Adrenal gland (tissue), 19 donors: ENCODE measurements at regions of chr20 and their contacts with region 1.

Region 1: DNA sequence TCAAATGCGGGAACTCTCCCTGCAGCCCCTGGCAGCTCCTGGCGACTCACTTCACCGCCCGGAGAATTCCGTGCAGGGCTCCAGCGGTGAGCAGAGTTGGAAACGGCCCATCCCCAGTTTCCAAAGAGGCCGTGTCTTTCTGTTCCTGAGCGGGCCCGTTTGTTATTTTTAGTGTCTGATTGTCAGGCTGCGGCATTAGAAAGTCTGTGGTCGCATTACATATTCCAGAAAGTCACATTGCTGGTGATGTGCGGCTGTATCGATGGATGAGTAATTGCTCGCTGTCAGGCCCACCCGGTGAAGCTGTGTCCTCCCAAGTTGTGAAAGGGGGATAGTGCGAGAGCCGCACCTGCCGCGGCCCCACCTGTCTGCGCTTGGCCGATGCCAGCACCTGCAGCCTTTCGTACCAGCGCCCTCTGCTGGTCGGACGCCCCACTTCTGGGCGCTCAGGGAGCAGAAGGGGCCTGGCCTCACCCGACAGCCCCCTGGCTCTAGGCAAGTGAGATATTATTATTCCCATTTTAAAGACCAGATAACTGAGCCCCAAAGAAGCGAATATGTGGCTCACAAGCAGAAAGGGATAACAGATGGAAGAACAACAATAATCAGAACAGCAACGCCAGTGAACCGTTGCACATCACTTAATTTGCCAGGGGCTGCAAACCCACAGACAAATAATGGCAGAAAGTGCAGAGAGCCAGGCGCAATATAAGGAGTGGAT is 244.9 kb downstream of the TSHZ2 start:
- DNase-seq: peak; percentile 52 to 85 (median 79)
- H3K4me3 ChIP-seq: peak overlapping the region in 1 of 4 donors; percentile 54
- H3K27ac ChIP-seq: no peak overlapping the region
- H3K4me1 ChIP-seq: peaks cover 0 to 10% of the 10 kb centered on the region in 2 donors
- H3K27me3 ChIP-seq: no peaks in the 10 kb centered on the region
- CTCF ChIP-seq: peak; percentile 71 to 95 (median 86)
- POLR2A ChIP-seq: no peak

Region 2: GRCh38 chr20:52312132-52312729 is 904.8 kb before region 1 on chr20:
- intact Hi-C with region 1: loop called in 1 of 2 experiments (anchors 10 kb)
- DNase-seq: peak; percentile 32 to 73 (median 52)
- H3K4me3 ChIP-seq: no peak overlapping the region
- H3K27ac ChIP-seq: no peak overlapping the region
- H3K4me1 ChIP-seq: peaks cover 0 to 6% of the 10 kb centered on the region in 2 donors
- H3K27me3 ChIP-seq: no peaks in the 10 kb centered on the region
- CTCF ChIP-seq: peak; percentile 58 to 78 (median 64)
- POLR2A ChIP-seq: no peak

Region 3: DNA sequence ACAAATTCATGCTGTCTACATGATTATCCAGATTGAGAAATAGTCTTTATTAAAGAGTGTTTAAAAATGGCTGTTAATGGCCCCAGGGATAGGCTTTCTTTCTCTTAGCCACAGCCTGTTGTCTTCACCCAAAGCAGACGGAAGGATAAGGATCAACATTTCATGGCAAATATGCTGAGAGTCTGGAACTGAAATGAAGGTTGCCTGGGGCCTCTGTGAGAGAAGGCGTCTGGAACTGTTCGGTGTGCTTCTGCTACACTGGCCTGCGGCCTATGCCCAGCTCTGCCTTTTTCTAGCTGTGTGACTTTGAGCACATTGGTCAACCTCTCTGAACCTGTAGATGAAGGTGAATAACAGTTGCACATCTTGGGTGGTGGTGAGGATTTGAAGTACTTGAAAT is 652.4 kb before region 1 on chr20:
- intact Hi-C with region 1: no loop called
- DNase-seq: no peak
- H3K4me3 ChIP-seq: no peak overlapping the region
- H3K27ac ChIP-seq: no peak overlapping the region
- H3K4me1 ChIP-seq: no peaks in the 10 kb centered on the region
- H3K27me3 ChIP-seq: no peaks in the 10 kb centered on the region
- CTCF ChIP-seq: no peak
- POLR2A ChIP-seq: no peak

Region 4: DNA sequence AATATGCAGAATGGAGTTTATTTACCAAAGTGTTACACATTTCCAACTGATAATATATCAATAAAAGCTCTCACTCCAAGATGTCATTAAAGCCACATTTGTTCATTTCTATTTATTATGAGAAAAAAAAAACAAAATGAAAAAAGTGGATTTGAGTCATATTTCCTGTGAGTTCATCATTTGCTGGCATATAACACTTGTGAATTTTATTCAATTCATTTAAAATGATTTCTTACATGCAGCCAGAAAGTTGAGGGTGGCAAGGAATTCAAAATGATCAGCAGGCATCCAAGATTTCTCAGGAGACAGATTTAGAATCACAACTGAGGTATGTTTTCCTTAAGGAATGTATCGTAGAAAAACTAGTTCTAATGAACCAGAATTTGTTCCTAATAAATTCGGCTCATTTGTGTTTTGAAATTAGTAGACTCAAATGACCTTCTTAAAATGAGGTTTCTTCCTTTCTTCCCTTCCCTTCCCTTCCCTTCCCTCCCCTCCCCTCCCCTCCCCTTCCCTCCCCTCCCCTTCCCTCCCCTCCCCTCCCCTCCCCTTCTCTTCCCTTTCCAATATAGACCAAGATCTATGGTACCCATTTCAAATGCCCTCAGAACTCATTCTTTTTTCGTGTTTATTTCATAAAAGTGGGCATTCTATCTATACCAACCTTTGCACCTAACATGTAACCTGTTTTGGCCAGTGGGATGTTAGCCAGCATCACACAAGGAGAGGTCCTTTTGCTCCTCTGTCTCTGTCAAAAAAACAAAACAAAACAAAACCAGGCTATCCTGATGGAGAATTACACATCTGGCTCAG is 602.8 kb before region 1 on chr20:
- intact Hi-C with region 1: no loop called
- DNase-seq: no peak
- H3K4me3 ChIP-seq: no peak overlapping the region
- H3K27ac ChIP-seq: no peak overlapping the region
- H3K4me1 ChIP-seq: no peaks in the 10 kb centered on the region
- H3K27me3 ChIP-seq: peaks cover 8% of the 10 kb centered on the region
- CTCF ChIP-seq: no peak
- POLR2A ChIP-seq: no peak

Region 5: GRCh38 chr20:52972190-52972937 is 244.7 kb before region 1 on chr20 and contains the start of gene TSHZ2:
- intact Hi-C with region 1: loop called in 1 of 2 experiments (anchors 10 kb)
- DNase-seq: peak; percentile 71 to 92 (median 83)
- H3K4me3 ChIP-seq: peak within 1 kb of the TSS; percentile 10 to 90 (median 87)
- H3K27ac ChIP-seq: peak within 1 kb of the TSS; percentile 60 to 95 (median 87)
- H3K4me1 ChIP-seq: peaks cover 7 to 15% of the 10 kb centered on the region in 2 donors
- H3K27me3 ChIP-seq: no peaks in the 10 kb centered on the region
- CTCF ChIP-seq: no peak
- POLR2A ChIP-seq: peak in 1 of 2 donors; percentile 62
- total RNA-seq, gene TSHZ2: 20.5 to 87.1 (median 64.8) TPM

Region 6: GRCh38 chr20:53104889-53105288 is 112.1 kb before region 1 on chr20:
- intact Hi-C with region 1: no loop called
- DNase-seq: no peak
- H3K4me3 ChIP-seq: no peak overlapping the region
- H3K27ac ChIP-seq: no peak overlapping the region
- H3K4me1 ChIP-seq: no peaks in the 10 kb centered on the region
- H3K27me3 ChIP-seq: no peaks in the 10 kb centered on the region
- CTCF ChIP-seq: no peak
- POLR2A ChIP-seq: no peak